Heart left ventricle (tissue), 16 donors: ENCODE measurements at regions of chr11 and their contacts with region 1.

Region 1: GRCh38 chr11:131511794-131512193 is 141.4 kb downstream of the NTM start:
- DNase-seq: peak in 1 of 5 donors; percentile 49
- ATAC-seq: peak in 3 of 4 donors; percentile 37 to 59 (median 46)
- H3K4me3 ChIP-seq: no peak overlapping the region
- H3K27ac ChIP-seq: no peak overlapping the region
- H3K4me1 ChIP-seq: no peaks in the 10 kb centered on the region
- H3K27me3 ChIP-seq: no peaks in the 10 kb centered on the region
- CTCF ChIP-seq: peak in 11 of 12 donors; percentile 13 to 58 (median 43)
- POLR2A ChIP-seq: no peak

Region 2: DNA sequence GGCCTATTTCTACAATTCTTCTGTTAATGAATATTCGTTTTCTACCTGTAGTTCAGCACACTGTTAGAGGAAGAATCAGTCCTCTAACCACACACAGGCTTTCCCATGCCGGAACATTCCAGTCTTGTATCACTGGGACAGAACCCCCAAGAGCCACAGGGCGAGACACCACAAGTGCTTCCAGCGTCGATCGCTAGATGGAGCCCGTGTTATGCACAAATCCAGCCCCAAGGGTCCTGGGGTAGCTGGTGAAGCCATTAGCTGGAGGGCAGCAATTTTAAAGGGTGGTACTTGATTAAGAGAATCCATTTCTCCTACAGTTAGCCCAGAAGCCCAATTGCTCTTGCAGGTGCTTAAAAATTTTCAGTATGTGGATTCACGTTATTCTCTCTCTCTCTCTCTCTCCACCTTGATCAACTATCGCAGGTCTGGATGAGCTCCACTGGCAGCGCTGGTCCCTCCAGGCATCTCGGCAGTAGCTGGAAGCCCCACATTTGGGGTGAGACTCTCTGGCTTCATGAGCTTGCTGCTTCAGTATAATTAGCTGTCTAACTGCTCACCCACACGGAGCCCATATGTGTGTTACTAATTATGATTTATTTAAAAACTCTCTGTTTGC is 447.3 kb before region 1 on chr11:
- intact Hi-C with region 1: loop called in 8 of 10 experiments (anchors 1 to 10 kb)
- DNase-seq: peak in 4 of 5 donors; percentile 20 to 49 (median 41)
- ATAC-seq: peak in 3 of 4 donors; percentile 53 to 83 (median 71)
- H3K4me3 ChIP-seq: no peak overlapping the region
- H3K27ac ChIP-seq: no peak overlapping the region
- H3K4me1 ChIP-seq: no peaks in the 10 kb centered on the region
- H3K27me3 ChIP-seq: peaks cover 0 to 34% (median 5%) of the 10 kb centered on the region in 9 donors
- CTCF ChIP-seq: peak; percentile 52 to 85 (median 74)
- POLR2A ChIP-seq: no peak

Region 3: GRCh38 chr11:131246663-131247062 is 265.1 kb before region 1 on chr11:
- intact Hi-C with region 1: loop called in 5 of 10 experiments (anchors 5 to 10 kb)
- DNase-seq: peak in 2 of 5 donors; percentile 44 to 45
- ATAC-seq: peak in 3 of 4 donors; percentile 71 to 82 (median 77)
- H3K4me3 ChIP-seq: no peak overlapping the region
- H3K27ac ChIP-seq: no peak overlapping the region
- H3K4me1 ChIP-seq: peaks cover 0 to 5% (median 0%) of the 10 kb centered on the region in 12 donors
- H3K27me3 ChIP-seq: peaks cover 0 to 32% (median 0%) of the 10 kb centered on the region in 9 donors
- CTCF ChIP-seq: peak in 11 of 12 donors; percentile 21 to 58 (median 46)
- POLR2A ChIP-seq: no peak

Region 4: DNA sequence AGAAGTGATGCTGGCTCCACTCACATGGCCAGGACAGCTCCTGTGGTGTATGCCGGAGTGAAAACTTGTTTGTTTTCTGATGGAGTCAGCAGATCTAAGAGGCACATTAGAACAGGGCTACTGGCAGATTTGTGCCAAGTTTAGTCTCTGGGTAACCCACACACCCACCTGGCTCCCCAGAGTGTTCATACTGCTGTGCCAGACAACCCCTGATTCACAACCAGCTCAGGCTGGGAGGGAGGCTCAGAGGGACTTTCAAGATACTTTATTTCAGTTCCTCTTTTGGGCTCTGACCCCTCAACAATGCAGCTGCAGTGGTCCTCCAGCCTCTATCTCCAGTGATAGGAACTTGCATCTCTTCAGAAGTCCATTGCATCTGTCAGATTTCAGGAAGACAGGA is 132.9 kb before region 1 on chr11:
- intact Hi-C with region 1: no loop called
- DNase-seq: no peak
- ATAC-seq: no peak
- H3K4me3 ChIP-seq: no peak overlapping the region
- H3K27ac ChIP-seq: no peak overlapping the region
- H3K4me1 ChIP-seq: no peaks in the 10 kb centered on the region
- H3K27me3 ChIP-seq: peaks cover 0 to 53% (median 6%) of the 10 kb centered on the region in 9 donors
- CTCF ChIP-seq: no peak
- POLR2A ChIP-seq: no peak

Region 5: GRCh38 chr11:131408025-131408640 is 103.7 kb before region 1 on chr11:
- intact Hi-C with region 1: loop called in 2 of 10 experiments (anchors 5 to 10 kb)
- DNase-seq: peak in 1 of 5 donors; percentile 35
- ATAC-seq: peak in 2 of 4 donors; percentile 36 to 64
- H3K4me3 ChIP-seq: no peak overlapping the region
- H3K27ac ChIP-seq: no peak overlapping the region
- H3K4me1 ChIP-seq: no peaks in the 10 kb centered on the region
- H3K27me3 ChIP-seq: peaks cover 0 to 13% (median 0%) of the 10 kb centered on the region in 9 donors
- CTCF ChIP-seq: peak in 10 of 12 donors; percentile 24 to 46 (median 35)
- POLR2A ChIP-seq: no peak

Region 6: DNA sequence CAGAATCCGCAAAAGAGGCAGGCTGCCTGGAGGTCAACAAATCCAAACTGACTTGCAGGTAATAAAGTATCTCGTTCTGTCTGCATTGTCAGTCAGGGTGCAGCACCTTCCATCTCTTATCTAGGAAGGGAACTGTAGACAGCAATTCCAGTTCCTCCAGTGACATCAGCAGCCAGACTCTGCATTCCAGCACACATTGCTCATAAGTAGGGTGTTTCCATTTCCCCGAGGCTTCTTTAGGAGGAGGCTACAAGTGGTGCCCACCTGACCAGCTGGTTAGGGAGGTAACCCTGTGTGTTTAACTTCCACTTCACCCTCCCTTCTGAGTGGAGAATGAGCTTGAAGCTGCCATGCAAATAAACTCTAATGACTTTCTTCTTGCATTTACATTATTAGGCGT is 88.1 kb before region 1 on chr11:
- intact Hi-C with region 1: loop called in 1 of 10 experiments (anchors 10 kb)
- DNase-seq: no peak
- ATAC-seq: no peak
- H3K4me3 ChIP-seq: no peak overlapping the region
- H3K27ac ChIP-seq: no peak overlapping the region
- H3K4me1 ChIP-seq: no peaks in the 10 kb centered on the region
- H3K27me3 ChIP-seq: peaks cover 0 to 19% (median 0%) of the 10 kb centered on the region in 9 donors
- CTCF ChIP-seq: no peak
- POLR2A ChIP-seq: no peak